ENCODE measurements at regions of chr14 and their contacts with region 1.

Region 1: DNA sequence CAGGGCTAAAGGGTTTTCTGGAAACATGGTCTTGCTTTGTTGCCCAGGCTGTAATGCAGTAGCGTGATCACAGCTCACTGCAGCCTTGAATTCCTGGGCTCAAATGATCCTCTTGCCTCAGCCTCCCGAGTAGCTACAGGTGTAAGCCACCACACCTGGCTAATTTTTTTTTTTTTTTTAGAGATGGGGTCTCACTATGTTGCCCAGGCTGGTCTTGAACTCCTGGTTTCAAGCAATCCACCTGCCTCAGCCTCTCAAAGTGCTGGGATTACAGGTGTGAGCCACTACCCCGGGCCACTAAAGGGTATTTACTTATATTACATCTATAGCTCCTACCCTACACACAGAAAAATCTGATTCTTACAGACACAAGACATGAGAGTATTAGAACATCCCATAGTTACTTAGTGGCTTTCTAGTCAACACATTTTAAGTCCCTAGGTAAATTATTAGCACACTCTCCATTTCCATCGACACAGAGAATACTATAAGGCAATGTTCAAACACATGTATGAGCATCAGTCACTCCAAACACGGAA is 6.2 kb upstream of the DCAF11 start:
- DNase-seq: no peak
- ATAC-seq: peak in 1 of 2 experiments; percentile 56; a peak in 4 of 6 replicates
- H3K4me3 ChIP-seq: no peak overlapping the region
- H3K27ac ChIP-seq: no peak overlapping the region
- H3K4me1 ChIP-seq: peaks cover 9% of the 10 kb centered on the region; the same call in 1 of the 3 replicates
- CTCF ChIP-seq: no peak
- EP300 ChIP-seq: no peak
- POLR2A ChIP-seq: no peak
- RAD21 ChIP-seq: no peak

Region 2: DNA sequence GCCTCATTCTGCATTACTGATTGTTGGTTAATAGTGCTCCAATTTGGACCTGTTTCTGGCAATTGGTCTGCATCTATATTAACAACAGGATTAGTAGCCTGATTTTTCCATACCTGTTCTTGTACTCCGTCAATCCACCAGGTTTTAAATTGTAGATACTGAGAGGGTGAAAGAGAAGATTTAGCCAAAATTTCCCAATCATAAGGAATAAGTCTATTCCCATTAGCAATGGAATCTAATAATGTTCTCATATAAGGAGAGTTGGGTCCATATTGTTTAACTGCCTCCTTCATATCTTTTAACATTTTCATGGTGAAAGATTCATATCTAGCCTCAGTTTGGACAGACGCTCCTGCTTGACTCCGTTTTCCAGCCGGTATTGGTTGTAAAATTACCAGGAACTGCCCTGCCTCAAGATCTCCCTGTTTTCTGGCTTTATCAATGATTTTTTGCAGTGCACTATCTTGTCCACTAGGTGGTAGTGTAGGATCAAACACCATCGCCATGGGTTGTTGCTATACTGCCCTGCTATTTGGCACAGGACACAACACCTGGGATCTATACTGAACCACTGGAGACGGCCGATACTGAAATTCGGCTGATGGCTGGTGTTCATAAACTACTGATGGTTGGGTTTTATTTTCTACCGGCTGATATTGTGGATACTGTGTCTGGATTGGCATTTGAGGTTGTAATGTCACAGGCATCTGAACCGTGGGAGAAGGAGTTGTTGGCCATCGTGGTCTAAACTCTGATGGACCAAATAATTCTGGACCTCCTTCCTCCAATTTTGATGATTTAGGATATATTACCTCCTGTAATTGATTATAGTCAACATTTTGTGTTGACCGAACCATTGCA is 94.5 kb before region 1 on chr14:
- CTCF ChIA-PET with region 1: interaction called, 14 read pairs
- POLR2A ChIA-PET with region 1: no interaction called
- DNase-seq: peak; percentile 58 to 77
- ATAC-seq: peak; percentile 85 to 87
- H3K4me3 ChIP-seq: no peak overlapping the region
- H3K27ac ChIP-seq: no peak overlapping the region
- H3K4me1 ChIP-seq: peaks cover 8% of the 10 kb centered on the region; the same call in 2 of the 3 replicates
- CTCF ChIP-seq: peak; percentile 93
- EP300 ChIP-seq: no peak
- POLR2A ChIP-seq: no peak
- RAD21 ChIP-seq: peak; percentile 95 to 98

Region 3: DNA sequence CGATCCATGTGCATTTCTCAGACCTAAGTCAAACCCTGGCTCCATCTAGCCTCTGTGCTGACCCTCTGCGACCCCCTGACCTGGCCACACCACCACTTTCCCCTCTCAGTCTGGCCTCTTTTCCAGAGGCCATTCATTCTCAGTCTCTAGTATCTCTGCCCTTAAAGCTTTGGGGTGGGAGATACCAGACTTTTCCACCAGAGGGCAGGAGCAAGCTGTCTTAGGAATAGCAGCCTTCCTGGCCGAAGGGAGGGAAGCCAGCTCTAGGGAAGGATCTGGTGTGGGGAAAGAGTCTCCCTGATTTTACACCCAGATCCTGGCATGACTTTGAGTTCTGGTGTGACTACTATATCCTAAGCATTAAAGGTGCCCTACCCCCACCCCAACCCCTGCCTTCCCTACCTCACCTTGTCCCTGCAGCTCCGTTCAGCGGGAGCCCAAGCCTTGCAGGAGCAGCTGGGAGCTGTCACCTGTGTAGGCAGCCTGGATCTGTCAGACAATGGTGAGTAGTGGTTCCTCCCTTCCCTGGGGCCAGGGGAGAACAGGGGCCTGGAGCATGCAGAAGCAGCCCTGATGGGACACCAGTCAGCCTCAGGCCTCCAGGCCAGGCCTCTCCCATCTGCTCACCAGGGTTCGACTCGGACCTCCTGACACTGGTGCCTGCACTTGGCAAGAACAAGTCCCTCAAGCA is 50.0 kb before region 1 on chr14:
- CTCF ChIA-PET with region 1: interaction called, 244 read pairs
- POLR2A ChIA-PET with region 1: interaction called, 13 read pairs
- DNase-seq: peak; percentile 71 to 78
- ATAC-seq: peak; percentile 88 to 94
- H3K4me3 ChIP-seq: no peak overlapping the region
- H3K27ac ChIP-seq: no peak overlapping the region
- H3K4me1 ChIP-seq: no peaks in the 10 kb centered on the region
- CTCF ChIP-seq: peak; percentile 78
- EP300 ChIP-seq: no peak
- POLR2A ChIP-seq: no peak
- RAD21 ChIP-seq: peak; percentile 85 to 95

Region 4: DNA sequence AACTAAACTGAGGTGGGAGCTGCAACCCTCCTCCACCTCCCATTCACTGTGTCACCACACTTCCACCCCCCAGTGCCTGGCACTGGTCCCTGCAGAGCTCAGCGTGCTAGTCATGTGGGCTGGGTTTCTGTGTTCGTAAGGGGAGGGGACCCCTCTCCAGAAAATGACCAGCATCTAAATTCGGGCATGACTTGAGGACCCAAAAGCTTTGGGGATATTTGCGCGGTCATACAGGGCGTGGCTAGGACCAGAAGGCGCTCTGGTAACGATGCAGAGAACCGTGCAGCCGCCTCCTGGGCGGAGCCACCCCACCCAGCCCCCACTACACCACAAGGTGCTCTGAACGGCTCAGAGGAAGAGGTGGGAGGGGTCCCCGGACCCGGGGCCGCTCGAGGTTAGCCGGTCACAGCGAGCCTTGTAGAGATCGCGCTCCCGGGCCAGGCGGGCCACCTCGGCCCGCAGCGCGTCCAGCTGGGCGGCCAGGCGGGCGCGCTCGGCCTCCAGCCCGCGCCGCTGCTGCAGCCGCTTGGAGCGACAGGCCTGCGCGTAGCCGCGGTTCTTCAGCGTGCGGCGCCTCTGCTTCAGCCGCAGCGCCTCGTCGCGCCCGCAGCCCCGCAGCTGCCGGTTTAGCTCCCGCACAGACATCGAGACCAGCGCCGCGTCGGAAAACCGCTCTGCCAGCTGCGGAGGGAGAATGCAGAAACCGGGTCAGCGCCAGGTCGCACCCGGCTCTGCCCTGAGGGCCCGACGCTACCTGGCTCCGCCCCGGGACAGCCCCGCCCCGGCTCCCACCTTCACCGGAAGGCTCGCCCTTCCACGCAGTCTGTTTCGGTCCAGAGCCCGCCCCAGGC is 27.3 kb before region 1 on chr14:
- CTCF ChIA-PET with region 1: interaction called, 34 read pairs
- POLR2A ChIA-PET with region 1: interaction called, 6 read pairs
- DNase-seq: peak; percentile 28 to 67
- ATAC-seq: peak; percentile 88 to 90
- H3K4me3 ChIP-seq: peak overlapping the region; percentile 79
- H3K27ac ChIP-seq: peak overlapping the region; percentile 92 to 93
- H3K4me1 ChIP-seq: peaks cover 15% of the 10 kb centered on the region
- CTCF ChIP-seq: no peak
- EP300 ChIP-seq: no peak
- POLR2A ChIP-seq: peak; percentile 46
- RAD21 ChIP-seq: no peak

Region 5: DNA sequence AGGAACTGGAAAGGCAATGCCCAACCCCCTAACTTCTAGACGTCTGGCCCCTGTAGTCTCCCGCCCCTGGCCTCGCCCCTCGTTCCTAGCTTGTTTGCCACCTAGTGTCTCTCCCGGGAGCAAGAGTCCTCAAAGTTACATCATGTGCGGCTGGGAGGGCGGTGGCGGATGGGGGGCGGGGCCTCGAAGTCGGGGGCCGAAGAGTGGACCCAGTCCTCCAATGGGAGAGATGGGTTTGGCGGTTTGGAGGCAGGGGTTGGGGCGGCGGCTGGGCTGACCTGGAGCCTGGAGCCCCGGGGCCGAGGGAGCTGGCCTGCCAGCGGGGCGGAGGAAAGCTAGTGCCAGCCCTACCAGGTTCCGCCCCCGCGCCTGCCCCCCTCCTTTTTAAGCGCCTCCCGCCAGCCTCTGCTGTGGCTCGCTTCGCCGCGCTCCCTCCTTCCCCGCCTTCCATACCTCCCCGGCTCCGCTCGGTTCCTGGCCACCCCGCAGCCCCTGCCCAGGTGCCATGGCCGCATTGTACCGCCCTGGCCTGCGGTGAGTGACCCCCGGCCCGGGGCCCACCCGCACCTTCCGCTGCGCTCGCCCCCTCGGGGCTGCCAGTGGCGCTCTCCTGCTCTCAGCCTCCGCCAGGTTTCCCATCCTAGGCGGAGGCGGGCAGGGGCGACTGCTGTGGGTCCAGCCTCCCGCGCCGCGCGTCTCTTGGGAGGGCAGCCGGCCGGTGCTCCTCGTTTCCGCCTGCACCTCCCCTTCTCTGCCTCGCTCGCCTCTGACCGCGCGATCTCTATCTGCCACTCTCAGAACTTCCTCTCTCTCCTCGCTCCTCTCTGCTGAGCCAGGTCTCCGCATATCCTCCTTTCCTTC is 14.3 kb before region 1 on chr14 and contains the start of gene PCK2:
- CTCF ChIA-PET with region 1: interaction called, 225 read pairs
- POLR2A ChIA-PET with region 1: interaction called, 55 read pairs
- DNase-seq: peak; percentile 95 to 97
- ATAC-seq: peak; percentile 93 to 94
- H3K4me3 ChIP-seq: peak within 1 kb of the TSS; percentile 70
- H3K27ac ChIP-seq: peak within 1 kb of the TSS; percentile 95 to 100
- H3K4me1 ChIP-seq: peaks cover 18% of the 10 kb centered on the region
- CTCF ChIP-seq: no peak
- EP300 ChIP-seq: no peak
- POLR2A ChIP-seq: peak; percentile 95
- RAD21 ChIP-seq: no peak
- polyA plus RNA-seq, gene PCK2: 52.1 and 60.2 TPM in 2 replicates

Region 6: GRCh38 chr14:24146978-24147760 is 38.8 kb after region 1 on chr14 and contains the start of gene RNF31:
- CTCF ChIA-PET with region 1: interaction called, 15 read pairs
- POLR2A ChIA-PET with region 1: no interaction called
- DNase-seq: peak; percentile 94 to 98
- ATAC-seq: peak; percentile 89 to 94
- H3K4me3 ChIP-seq: peak within 1 kb of the TSS; percentile 89
- H3K27ac ChIP-seq: peak within 1 kb of the TSS; percentile 91 to 98
- H3K4me1 ChIP-seq: peaks cover 16% of the 10 kb centered on the region
- CTCF ChIP-seq: no peak
- EP300 ChIP-seq: no peak
- POLR2A ChIP-seq: peak; percentile 42; the same call in 1 of the 2 replicates
- RAD21 ChIP-seq: no peak
- polyA plus RNA-seq, gene RNF31: 5.7 and 19.1 TPM in 2 replicates

Region 7: DNA sequence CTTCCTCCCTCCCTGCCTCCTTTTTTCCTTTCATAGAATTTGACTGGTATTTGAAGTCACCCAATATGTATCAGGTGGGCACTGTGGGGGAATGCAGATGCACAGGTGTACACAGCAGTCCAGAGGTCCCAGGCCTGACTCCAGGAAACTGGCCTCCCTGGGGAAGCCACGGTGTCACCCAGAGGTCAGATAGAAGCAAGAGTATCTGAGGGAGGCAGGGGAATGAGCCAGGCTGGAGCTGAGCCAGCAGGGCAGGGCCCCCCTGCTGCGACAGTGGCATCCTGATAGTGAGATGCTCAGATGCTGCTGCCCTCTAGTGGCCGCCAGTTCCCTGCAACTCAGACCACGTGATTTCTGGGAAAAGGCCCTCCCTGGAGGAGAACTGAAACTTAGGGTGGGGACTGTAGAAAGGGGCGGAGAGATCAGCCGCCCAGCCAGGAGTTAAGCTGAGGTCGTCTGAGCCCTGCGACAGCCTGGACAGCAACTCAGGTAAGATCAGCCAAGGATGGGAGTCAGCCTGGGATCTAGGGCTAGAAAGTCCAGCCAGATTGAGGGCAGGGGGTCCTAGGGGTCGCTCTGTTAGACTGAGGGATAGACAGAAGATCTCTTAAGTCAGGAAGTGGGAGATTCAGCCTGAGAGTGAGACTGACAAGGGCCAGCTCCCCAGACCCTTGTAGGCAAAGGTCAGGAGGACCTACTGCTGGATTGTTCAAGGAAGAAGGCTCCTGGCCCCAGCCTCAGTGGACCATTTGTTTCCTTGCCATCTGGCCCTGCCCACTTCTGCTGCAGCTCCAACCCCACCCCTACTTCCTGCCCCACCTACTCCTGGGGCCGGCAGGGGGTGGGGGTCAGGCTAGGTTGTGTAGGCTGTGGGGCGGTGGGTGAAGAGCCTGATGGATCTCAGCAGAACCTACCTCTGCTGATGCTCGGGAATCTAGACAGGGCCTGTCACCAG is 52.7 kb after region 1 on chr14 and contains the start of gene IRF9:
- CTCF ChIA-PET with region 1: interaction called, 47 read pairs
- POLR2A ChIA-PET with region 1: interaction called, 16 read pairs
- DNase-seq: peak; percentile 95 to 96
- ATAC-seq: peak; percentile 79 to 94
- H3K4me3 ChIP-seq: peak within 1 kb of the TSS; percentile 47
- H3K27ac ChIP-seq: peak within 1 kb of the TSS; percentile 86 to 91
- H3K4me1 ChIP-seq: peaks cover 25% of the 10 kb centered on the region
- CTCF ChIP-seq: peak; percentile 92
- EP300 ChIP-seq: no peak
- POLR2A ChIP-seq: no peak
- RAD21 ChIP-seq: peak; percentile 72 to 78
- polyA plus RNA-seq, gene IRF9: 23.1 and 30.2 TPM in 2 replicates

Region 8: GRCh38 chr14:24351517-24351916 is 243.1 kb after region 1 on chr14:
- CTCF ChIA-PET with region 1: no interaction called
- POLR2A ChIA-PET with region 1: no interaction called
- DNase-seq: no peak
- ATAC-seq: peak; percentile 55 to 70; a peak in 4 of 6 replicates
- H3K4me3 ChIP-seq: no peak overlapping the region
- H3K27ac ChIP-seq: no peak overlapping the region
- H3K4me1 ChIP-seq: peaks cover 17% of the 10 kb centered on the region
- CTCF ChIP-seq: no peak
- EP300 ChIP-seq: no peak
- POLR2A ChIP-seq: no peak
- RAD21 ChIP-seq: no peak

Region 9: DNA sequence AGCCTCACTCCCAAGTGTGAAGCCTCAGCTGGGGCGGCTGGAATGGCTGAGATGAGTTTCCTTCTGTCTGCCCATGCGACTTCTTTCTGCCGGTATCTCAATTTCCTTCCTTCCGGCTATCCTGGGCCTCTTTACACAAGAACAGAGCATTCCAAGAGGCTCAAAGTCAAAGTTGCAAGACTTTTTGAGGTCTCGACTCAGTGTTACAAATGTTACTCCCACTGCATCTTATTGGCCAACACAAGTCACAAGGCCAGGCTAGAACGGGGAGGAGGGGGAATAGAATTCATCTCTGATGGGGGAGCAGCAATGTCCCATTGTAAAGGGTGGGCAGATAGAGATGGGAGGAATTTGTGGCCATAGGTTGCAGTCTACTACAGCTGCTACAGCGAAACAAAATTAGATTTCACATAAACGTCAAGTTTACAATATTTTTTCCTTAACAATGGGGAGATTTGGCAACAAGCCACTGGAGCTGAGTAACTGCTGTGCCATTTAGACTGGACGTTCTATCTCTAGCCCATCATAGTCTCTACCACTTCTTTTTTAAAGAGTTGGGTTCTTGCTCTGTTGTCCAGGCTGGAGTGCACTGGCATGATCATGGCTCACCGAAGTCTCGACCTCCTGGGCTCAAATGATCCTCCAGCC is 280.9 kb after region 1 on chr14:
- CTCF ChIA-PET with region 1: no interaction called
- POLR2A ChIA-PET with region 1: no interaction called
- DNase-seq: no peak
- ATAC-seq: no peak
- H3K4me3 ChIP-seq: no peak overlapping the region
- H3K27ac ChIP-seq: no peak overlapping the region
- H3K4me1 ChIP-seq: peaks cover 14% of the 10 kb centered on the region
- CTCF ChIP-seq: no peak
- EP300 ChIP-seq: no peak
- POLR2A ChIP-seq: no peak
- RAD21 ChIP-seq: no peak

Region 10: GRCh38 chr14:24705840-24706239 is 597.4 kb after region 1 on chr14:
- CTCF ChIA-PET with region 1: no interaction called
- POLR2A ChIA-PET with region 1: no interaction called
- DNase-seq: no peak
- ATAC-seq: no peak
- H3K4me3 ChIP-seq: no peak overlapping the region
- H3K27ac ChIP-seq: no peak overlapping the region
- H3K4me1 ChIP-seq: no peaks in the 10 kb centered on the region
- CTCF ChIP-seq: no peak
- EP300 ChIP-seq: no peak
- POLR2A ChIP-seq: no peak
- RAD21 ChIP-seq: no peak

Measured in A549 (cell line).